Breast epithelium (tissue), 4 donors: ENCODE measurements at regions of chr10 and their contacts with region 1.

Region 1: GRCh38 chr10:104349623-104350126 is 4.0 kb upstream of the CFAP58 start:
- DNase-seq: no peak
- H3K4me3 ChIP-seq: peak overlapping the region in 2 of 3 donors; percentile 6 to 51
- H3K27ac ChIP-seq: peak overlapping the region; percentile 77 to 78
- H3K4me1 ChIP-seq: no peaks in the 10 kb centered on the region
- H3K27me3 ChIP-seq: no peaks in the 10 kb centered on the region
- CTCF ChIP-seq: no peak
- POLR2A ChIP-seq: no peak

Region 2: GRCh38 chr10:103481974-103482531 is 867.6 kb before region 1 on chr10:
- intact Hi-C with region 1: no loop called
- DNase-seq: no peak
- H3K4me3 ChIP-seq: no peak overlapping the region
- H3K27ac ChIP-seq: no peak overlapping the region
- H3K4me1 ChIP-seq: no peaks in the 10 kb centered on the region
- H3K27me3 ChIP-seq: no peaks in the 10 kb centered on the region
- CTCF ChIP-seq: peak; percentile 21 to 57 (median 48)
- POLR2A ChIP-seq: no peak

Region 3: DNA sequence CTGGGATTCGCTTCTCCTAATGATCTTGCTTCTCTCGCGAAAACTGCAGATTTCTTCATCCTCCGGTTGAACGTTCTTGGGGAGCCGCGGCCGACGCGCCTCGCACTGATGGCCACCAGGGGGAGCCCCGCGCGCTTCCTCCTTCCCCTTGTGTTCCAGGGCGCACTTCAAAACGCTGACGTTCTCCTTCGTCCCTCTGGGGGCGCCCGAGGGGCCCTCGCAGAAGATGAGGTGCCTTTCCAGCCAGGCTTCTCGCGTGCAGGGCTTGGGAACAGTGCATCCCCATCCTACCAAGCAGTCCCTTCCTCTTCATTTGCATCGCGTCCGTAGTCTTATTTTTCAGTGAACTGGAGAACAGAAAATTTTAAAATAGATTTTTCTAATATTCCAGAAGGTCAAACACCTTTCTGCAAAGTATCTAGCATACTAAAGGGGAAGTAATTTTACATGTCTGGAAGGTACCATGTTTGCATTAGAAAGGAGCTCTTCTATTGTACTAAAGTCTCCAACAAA is 58.2 kb before region 1 on chr10:
- intact Hi-C with region 1: loop called (anchors 5 kb)
- DNase-seq: peak; percentile 82 to 92
- H3K4me3 ChIP-seq: no peak overlapping the region
- H3K27ac ChIP-seq: no peak overlapping the region
- H3K4me1 ChIP-seq: no peaks in the 10 kb centered on the region
- H3K27me3 ChIP-seq: no peaks in the 10 kb centered on the region
- CTCF ChIP-seq: peak; percentile 98 to 100 (median 99)
- POLR2A ChIP-seq: no peak

Region 4: GRCh38 chr10:104308439-104308903 is 41.2 kb before region 1 on chr10:
- intact Hi-C with region 1: loop called (anchors 5 kb)
- DNase-seq: no peak
- H3K4me3 ChIP-seq: no peak overlapping the region
- H3K27ac ChIP-seq: no peak overlapping the region
- H3K4me1 ChIP-seq: no peaks in the 10 kb centered on the region
- H3K27me3 ChIP-seq: no peaks in the 10 kb centered on the region
- CTCF ChIP-seq: no peak
- POLR2A ChIP-seq: no peak